Psoas muscle (tissue), 8 donors: ENCODE measurements at regions of chr1 and their contacts with region 1.

Region 1: DNA sequence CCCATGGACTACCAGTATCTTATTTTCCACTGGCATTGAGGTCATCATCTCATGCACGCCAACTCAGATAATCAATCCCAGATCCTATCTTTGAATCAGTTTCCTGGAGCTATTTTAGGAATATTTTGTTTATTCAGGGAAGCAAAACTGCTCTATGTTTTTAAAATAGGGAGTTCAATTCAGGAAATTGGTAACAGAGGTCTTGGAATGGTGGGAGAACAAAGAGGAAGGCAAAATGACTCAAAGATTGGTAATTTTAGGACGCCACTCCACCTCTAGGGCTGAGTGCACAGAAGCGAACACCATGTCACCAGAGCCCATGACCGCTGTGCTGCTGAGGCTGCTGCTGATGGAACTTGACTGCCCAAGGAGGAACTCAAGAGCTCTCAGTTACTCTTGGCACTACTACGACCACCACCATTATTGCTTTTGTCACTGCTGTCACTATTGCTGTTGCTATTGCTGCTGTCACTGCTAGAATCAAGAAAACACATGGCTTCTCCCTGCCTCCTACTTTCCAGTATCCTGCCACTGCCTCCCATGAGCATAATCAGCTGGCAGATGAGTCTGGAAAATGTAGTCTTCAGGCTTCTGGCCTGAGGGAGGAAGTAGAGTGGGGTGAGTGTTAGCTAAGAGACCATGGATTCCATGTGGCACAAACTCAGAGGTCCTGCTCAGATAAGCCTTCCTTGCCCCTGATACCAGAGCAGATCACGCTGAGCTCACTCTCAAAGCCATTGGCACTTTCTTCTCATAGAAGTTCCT is 71.6 kb upstream of the CNIH3 start:
- DNase-seq: no peak
- ATAC-seq: no peak
- H3K4me3 ChIP-seq: no peak overlapping the region
- H3K27ac ChIP-seq: no peak overlapping the region
- H3K4me1 ChIP-seq: no peaks in the 10 kb centered on the region
- H3K27me3 ChIP-seq: no peaks in the 10 kb centered on the region
- CTCF ChIP-seq: no peak

Region 2: DNA sequence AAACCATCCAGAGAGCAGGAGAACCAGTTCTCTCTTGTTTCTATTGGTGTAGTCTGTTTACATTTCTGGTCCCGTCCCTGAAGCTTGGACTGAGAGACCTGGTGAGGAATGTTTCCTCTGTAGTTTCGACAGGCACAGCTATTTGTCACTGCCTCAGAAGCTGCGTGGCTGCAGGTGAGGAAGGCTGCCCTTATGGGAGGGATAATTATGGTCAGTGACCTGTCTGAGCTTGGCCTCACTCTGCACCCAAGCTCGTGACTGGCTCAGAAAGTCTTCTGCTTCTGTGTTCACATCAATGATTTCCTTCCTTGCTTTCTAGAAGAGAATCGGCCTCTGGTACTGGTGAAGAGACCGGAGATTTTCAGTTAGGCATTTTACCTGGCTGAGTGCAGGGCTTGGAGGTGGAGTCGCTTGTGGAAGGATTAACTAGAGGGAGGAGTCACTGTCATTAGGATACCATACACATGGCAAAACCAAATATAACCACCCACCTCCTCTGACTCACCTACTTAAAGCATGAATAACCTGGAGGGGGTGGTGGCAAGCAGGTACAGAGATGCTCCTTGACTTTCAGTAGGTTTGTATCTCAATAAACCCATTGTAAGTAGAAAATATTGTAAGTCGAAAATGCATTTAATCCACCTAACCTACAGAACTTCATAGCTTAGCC is 90.0 kb before region 1 on chr1:
- intact Hi-C with region 1: no loop called
- DNase-seq: no peak
- ATAC-seq: no peak
- H3K4me3 ChIP-seq: no peak overlapping the region
- H3K27ac ChIP-seq: no peak overlapping the region
- H3K4me1 ChIP-seq: peaks cover 20% of the 10 kb centered on the region
- H3K27me3 ChIP-seq: no peaks in the 10 kb centered on the region
- CTCF ChIP-seq: no peak

Region 3: DNA sequence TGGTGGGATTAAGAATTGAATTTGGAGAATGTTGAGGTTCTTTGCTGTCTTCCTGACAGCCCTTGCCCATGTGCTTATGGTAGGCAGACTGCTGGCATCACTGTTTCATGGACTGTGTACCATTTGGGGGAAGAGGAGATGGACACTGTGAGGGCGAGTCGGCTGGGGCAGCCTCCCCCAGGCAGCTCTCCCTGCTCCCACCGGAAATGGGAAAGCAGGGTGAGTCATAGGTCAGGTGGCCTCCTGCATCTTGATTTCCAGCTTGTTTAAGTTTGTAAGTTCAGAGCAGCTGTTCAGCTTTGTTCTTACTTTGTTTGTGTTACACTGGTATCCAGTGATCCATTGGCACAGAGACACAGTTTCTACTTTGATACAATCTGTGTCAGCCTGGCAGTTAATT is 15.6 kb before region 1 on chr1:
- intact Hi-C with region 1: no loop called
- DNase-seq: no peak
- ATAC-seq: peak in 2 of 4 donors; percentile 60 to 73
- H3K4me3 ChIP-seq: no peak overlapping the region
- H3K27ac ChIP-seq: no peak overlapping the region
- H3K4me1 ChIP-seq: peaks cover 4% of the 10 kb centered on the region
- H3K27me3 ChIP-seq: no peaks in the 10 kb centered on the region
- CTCF ChIP-seq: no peak

Region 4: GRCh38 chr1:224559981-224560728 is 15.6 kb after region 1 on chr1:
- intact Hi-C with region 1: loop called in 1 of 2 experiments (anchors 2 kb)
- DNase-seq: no peak
- ATAC-seq: no peak
- H3K4me3 ChIP-seq: no peak overlapping the region
- H3K27ac ChIP-seq: no peak overlapping the region
- H3K4me1 ChIP-seq: peaks cover 16% of the 10 kb centered on the region
- H3K27me3 ChIP-seq: no peaks in the 10 kb centered on the region
- CTCF ChIP-seq: no peak

Region 5: GRCh38 chr1:224759681-224760091 is 215.2 kb after region 1 on chr1:
- intact Hi-C with region 1: no loop called
- DNase-seq: no peak
- ATAC-seq: no peak
- H3K4me3 ChIP-seq: no peak overlapping the region
- H3K27ac ChIP-seq: no peak overlapping the region
- H3K4me1 ChIP-seq: no peaks in the 10 kb centered on the region
- H3K27me3 ChIP-seq: no peaks in the 10 kb centered on the region
- CTCF ChIP-seq: no peak